HepG2 (cell line): ENCODE measurements at regions of chr17 and their contacts with region 1.

Region 1: GRCh38 chr17:16380640-16381495 is at the start of gene UBB:
- DNase-seq: peak; percentile 94
- ATAC-seq: peak; percentile 90
- H3K4me3 ChIP-seq: peak within 1 kb of the TSS; percentile 77 to 97 (median 86)
- H3K27ac ChIP-seq: peak within 1 kb of the TSS; percentile 92
- H3K4me1 ChIP-seq: peaks cover 66% of the 10 kb centered on the region
- H3K27me3 ChIP-seq: no peaks in the 10 kb centered on the region; a peak in 1 of 5 replicates
- CTCF ChIP-seq: peak; percentile 52
- EP300 ChIP-seq: peak in 1 of 2 experiments; percentile 79; a peak in 3 of 4 replicates
- POLR2A ChIP-seq: peak; percentile 98 to 99
- RAD21 ChIP-seq: no peak
- total RNA-seq, gene UBB: 2,066 and 2,598 TPM in 2 replicates

Region 2: GRCh38 chr17:16243811-16244567 is 136.9 kb before region 1 on chr17:
- CTCF ChIA-PET with region 1: no interaction called
- POLR2A ChIA-PET with region 1: no interaction called
- in situ Hi-C with region 1: no loop called
- intact Hi-C with region 1: no loop called
- DNase-seq: peak; percentile 26
- ATAC-seq: peak; percentile 50
- H3K4me3 ChIP-seq: no peak overlapping the region
- H3K27ac ChIP-seq: peak overlapping the region; percentile 48
- H3K4me1 ChIP-seq: peaks cover 64% of the 10 kb centered on the region
- H3K27me3 ChIP-seq: no peaks in the 10 kb centered on the region
- CTCF ChIP-seq: no peak
- EP300 ChIP-seq: no peak
- POLR2A ChIP-seq: no peak
- RAD21 ChIP-seq: no peak

Region 3: GRCh38 chr17:16285957-16286640 is 94.8 kb before region 1 on chr17:
- CTCF ChIA-PET with region 1: no interaction called
- POLR2A ChIA-PET with region 1: interaction called, 20 read pairs
- in situ Hi-C with region 1: no loop called
- intact Hi-C with region 1: no loop called
- DNase-seq: peak; percentile 99
- ATAC-seq: peak; percentile 95
- H3K4me3 ChIP-seq: peak overlapping the region in 2 of 3 experiments; percentile 34 to 45; a peak in 5 of 6 replicates
- H3K27ac ChIP-seq: peak overlapping the region; percentile 95
- H3K4me1 ChIP-seq: peaks cover 79% of the 10 kb centered on the region
- H3K27me3 ChIP-seq: no peaks in the 10 kb centered on the region; a peak in 1 of 5 replicates
- CTCF ChIP-seq: peak; percentile 99
- EP300 ChIP-seq: peak; percentile 55 to 76; a peak in 3 of 4 replicates
- POLR2A ChIP-seq: peak; percentile 81 to 88
- RAD21 ChIP-seq: peak; percentile 95

Region 4: DNA sequence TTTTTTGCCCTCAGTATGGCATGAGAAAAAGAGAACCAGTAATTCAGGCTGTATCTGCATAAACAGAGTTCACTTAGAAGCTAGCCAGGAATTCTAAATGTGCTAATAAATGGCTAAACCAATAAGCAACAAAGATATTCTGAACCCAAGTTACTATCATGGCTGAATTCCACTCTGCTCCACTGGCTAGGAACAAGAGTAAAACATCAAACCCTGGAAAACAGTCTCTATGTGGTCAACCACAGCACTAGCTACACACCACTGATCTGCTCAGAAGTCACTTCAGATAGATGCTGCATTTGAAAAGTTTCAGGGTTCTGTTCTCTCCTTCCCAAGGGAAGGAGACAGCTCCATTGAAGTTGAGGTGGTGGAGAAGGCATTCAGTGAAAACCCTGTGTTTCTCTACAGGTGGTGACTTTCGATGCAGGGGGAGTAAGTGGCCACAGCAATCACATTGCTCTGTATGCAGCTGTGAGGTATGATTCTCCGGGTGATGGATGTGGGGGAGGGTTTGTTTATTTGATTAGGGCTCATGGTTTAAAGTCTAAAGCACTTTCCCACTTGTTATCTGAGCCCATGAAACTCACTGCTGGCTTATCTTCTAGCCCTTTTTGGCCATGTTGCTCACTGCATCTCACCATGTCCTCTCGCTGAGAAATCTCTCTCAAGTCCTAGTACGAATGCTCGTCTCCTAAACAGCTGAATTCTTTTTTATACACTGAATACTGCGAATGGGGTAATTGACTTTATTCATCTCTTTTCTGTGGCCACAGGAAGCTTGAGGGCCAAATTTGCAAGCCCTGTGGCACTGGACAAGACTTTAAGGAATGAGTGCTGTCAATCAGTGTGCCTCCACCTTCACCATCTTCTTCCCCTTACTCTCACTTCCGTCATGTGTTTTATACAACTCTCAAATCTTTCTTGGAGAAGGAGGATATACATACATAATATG is 67.5 kb before region 1 on chr17:
- CTCF ChIA-PET with region 1: no interaction called
- POLR2A ChIA-PET with region 1: interaction called, 10 read pairs
- in situ Hi-C with region 1: no loop called
- intact Hi-C with region 1: no loop called
- DNase-seq: peak; percentile 94
- ATAC-seq: peak; percentile 97
- H3K4me3 ChIP-seq: peak overlapping the region in 2 of 3 experiments; percentile 1 to 35; a peak in 2 of 6 replicates
- H3K27ac ChIP-seq: peak overlapping the region; percentile 97
- H3K4me1 ChIP-seq: peaks cover 55% of the 10 kb centered on the region
- H3K27me3 ChIP-seq: no peaks in the 10 kb centered on the region
- CTCF ChIP-seq: peak; percentile 11; the same call in 1 of the 2 replicates
- EP300 ChIP-seq: peak in 1 of 2 experiments; percentile 76; a peak in 3 of 4 replicates
- POLR2A ChIP-seq: peak; percentile 44 to 55; a peak in 2 of 4 replicates
- RAD21 ChIP-seq: 0 out of 2 replicates have a peak, but pooled peaks have one; percentile 41

Region 5: GRCh38 chr17:16363749-16364536 is 16.9 kb before region 1 on chr17:
- CTCF ChIA-PET with region 1: no interaction called
- POLR2A ChIA-PET with region 1: interaction called, 19 read pairs
- in situ Hi-C with region 1: no loop called
- intact Hi-C with region 1: no loop called
- DNase-seq: peak; percentile 66
- ATAC-seq: peak; percentile 93
- H3K4me3 ChIP-seq: no peak overlapping the region
- H3K27ac ChIP-seq: no peak overlapping the region
- H3K4me1 ChIP-seq: peaks cover 38% of the 10 kb centered on the region
- H3K27me3 ChIP-seq: no peaks in the 10 kb centered on the region
- CTCF ChIP-seq: peak; percentile 86
- EP300 ChIP-seq: no peak
- POLR2A ChIP-seq: no peak
- RAD21 ChIP-seq: peak; percentile 74

Region 6: DNA sequence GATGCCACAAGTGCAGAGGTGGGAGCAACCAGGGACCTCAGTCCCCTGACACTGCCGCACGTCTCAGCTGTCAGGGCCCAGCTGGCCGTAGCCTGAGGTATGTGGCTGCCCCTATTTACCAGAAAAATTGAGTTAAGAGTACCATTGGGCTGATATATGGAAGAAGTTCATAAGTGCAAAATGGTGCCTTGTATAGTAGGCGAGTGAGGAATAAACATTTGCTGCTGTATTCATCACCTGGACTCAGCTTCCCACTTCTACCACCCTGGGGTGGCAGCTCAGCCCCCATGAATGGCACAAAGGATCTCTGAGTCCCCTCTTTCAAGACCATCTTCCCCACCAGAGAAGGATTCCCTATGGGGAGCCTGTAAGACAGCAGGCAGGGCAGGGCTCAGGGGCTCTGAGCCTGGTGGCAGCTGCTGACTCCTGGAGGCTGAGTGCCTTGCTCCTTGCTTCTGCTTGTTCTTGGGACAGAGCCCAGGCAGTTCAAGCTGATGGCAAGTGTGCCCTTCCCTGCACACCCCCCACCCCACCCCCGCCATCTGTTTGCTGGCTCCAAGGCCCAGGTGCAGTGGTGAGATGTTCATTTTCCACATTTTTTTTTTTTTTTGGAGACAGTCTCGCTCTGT is 63.5 kb after region 1 on chr17:
- CTCF ChIA-PET with region 1: no interaction called
- POLR2A ChIA-PET with region 1: interaction called, 45 read pairs
- in situ Hi-C with region 1: no loop called
- intact Hi-C with region 1: no loop called
- DNase-seq: no peak
- ATAC-seq: peak; percentile 12
- H3K4me3 ChIP-seq: no peak overlapping the region; a peak in 1 of 6 replicates
- H3K27ac ChIP-seq: peak overlapping the region; percentile 89
- H3K4me1 ChIP-seq: peaks cover 72% of the 10 kb centered on the region
- H3K27me3 ChIP-seq: no peaks in the 10 kb centered on the region; a peak in 1 of 5 replicates
- CTCF ChIP-seq: no peak
- EP300 ChIP-seq: no peak
- POLR2A ChIP-seq: no peak; a peak in 1 of 4 replicates
- RAD21 ChIP-seq: no peak

Region 7: DNA sequence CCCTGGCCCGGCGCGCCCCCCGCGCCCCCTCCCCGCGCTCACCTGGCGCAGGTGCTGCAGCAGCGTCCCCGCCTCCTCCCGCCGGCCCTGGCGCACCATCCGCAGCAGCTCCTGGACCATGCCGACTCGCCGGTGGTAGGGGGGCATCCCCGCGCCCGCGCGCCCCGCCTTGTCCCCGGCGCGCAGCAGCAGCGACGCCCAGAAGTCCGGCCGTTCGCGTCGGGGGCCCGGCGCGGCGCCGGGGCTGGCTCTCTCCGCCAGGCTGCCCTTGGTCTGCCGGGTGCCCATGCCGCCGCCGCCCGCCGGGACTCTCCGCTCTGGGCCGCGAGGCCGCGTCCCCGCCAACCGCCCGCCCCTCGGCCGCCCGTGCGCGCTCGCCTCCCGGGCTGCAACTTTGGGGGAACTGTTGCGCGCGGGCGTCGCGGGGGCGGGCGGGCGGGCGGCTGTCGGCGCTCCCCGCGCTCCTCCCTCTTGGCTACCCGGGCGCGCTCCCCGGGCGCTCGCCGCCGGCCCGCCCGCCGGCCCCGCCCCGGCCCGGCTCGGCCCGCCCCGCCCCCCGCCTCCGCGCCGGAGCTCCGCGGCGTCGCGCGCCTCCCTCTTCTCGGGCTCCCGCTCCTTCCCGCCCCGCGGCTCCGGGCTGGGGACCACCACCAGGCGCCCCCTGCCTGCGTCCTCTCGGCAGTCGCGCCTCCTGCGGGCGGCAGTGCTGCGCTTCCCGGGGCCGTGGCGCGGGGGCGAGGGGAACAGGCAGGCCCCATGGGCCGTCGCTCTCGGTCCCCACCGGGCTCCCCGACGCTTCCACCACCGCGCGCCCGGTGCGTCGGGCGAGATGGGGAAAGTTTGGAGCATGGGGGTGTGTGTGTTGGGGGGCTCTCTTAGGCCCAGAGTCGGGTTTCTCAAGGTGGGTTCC is 111.1 kb after region 1 on chr17 and contains the start of gene LRRC75A:
- CTCF ChIA-PET with region 1: no interaction called
- POLR2A ChIA-PET with region 1: no interaction called
- in situ Hi-C with region 1: no loop called
- intact Hi-C with region 1: no loop called
- DNase-seq: no peak
- ATAC-seq: peak; percentile 39
- H3K4me3 ChIP-seq: peak within 1 kb of the TSS; percentile 34 to 67 (median 44); a peak in 4 of 6 replicates
- H3K27ac ChIP-seq: no peak within 1 kb of the TSS
- H3K4me1 ChIP-seq: peaks cover 25% of the 10 kb centered on the region
- H3K27me3 ChIP-seq: peaks cover 19 to 70% of the 10 kb centered on the region in 2 experiments; a peak in 3 of 5 replicates
- CTCF ChIP-seq: peak; percentile 34; the same call in 1 of the 2 replicates
- EP300 ChIP-seq: no peak
- POLR2A ChIP-seq: no peak
- RAD21 ChIP-seq: no peak
- total RNA-seq, gene LRRC75A: 0.06 TPM in 1 of 2 replicates, not detected in the other

Region 8: DNA sequence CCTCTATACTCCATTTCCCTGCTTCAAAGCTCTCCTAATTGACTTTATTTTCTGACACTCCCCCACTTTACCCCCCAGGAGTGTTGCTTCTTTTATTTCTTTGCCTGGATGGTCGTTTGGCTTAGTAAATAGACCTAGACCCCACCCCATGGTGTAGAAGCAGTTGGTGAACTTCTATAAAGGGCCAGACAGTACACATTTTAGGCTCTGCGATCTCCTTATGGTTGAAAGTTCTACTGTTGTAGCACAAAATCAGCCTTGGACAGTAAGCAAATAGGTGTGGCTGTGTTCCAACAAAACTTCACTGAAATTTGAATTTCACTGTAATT is 156.2 kb after region 1 on chr17:
- CTCF ChIA-PET with region 1: no interaction called
- POLR2A ChIA-PET with region 1: interaction called, 13 read pairs
- in situ Hi-C with region 1: no loop called
- intact Hi-C with region 1: no loop called
- DNase-seq: no peak
- ATAC-seq: no peak
- H3K4me3 ChIP-seq: peak overlapping the region in 1 of 3 experiments; percentile 86; a peak in 2 of 6 replicates
- H3K27ac ChIP-seq: no peak overlapping the region
- H3K4me1 ChIP-seq: peaks cover 11% of the 10 kb centered on the region
- H3K27me3 ChIP-seq: no peaks in the 10 kb centered on the region
- CTCF ChIP-seq: no peak
- EP300 ChIP-seq: no peak
- POLR2A ChIP-seq: no peak
- RAD21 ChIP-seq: no peak